ENCODE measurements at regions of chr9 and their contacts with region 1.

Region 1: DNA sequence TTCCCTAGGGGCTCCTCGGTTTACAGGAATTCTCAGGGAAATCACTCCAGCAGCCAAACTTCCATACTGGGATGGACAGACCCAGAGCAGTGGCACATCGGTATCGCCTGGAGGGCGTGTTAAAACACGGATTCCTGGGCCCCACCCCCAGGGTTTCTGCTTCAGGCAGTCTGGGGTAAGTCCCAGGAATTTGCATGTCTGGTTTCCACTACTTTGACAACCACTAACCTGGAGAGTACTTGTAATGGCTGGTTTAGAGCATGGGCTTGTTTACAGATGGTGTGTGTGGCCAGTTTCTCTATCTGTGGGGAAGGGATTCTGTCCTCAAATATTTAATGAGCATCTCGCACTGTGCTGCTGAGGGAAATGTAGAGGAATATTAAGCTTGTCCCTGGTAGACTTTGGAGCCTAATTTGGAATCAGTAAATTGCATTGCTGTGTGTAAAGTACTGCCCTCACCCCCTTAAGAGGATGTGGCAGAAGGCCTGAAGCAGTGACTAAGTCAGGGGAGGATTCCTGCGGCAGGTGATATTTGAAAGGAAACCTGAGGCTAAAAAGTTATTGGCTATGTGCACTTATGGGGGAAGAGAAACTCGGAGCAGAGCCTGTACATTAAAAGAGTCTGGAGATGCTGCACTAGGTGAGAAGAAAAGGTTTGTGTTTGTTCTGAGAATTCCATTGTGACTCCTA is 18.6 kb upstream of the TJP2 start:
- DNase-seq: no peak
- ATAC-seq: no peak
- H3K4me3 ChIP-seq: no peak overlapping the region
- H3K27ac ChIP-seq: no peak overlapping the region
- H3K4me1 ChIP-seq: 0 out of 4 replicates have a peak, but pooled peaks cover 0 to 2% of the 10 kb centered on the region in 2 experiments
- H3K27me3 ChIP-seq: no peaks in the 10 kb centered on the region
- CTCF ChIP-seq: no peak
- POLR2A ChIP-seq: no peak
- RAD21 ChIP-seq: no peak

Region 2: DNA sequence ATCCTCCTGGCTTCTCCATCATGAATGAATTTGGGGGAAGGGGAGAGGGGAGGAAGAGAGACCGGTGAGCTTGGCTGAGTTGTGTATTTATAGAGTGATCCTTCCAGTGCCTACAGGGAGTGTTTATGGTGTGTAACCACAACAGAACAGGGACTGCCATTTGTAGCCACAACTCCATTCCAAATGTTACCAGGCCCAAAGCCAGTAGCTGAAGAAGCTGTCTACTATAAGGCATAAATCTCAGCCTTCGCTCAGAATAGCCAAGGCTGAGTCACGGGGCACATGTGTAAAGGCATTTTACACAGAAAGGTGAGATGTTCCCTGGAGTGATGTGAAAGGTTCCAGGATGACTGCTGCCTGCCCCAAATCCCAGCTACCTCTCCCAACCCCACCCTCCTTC is 617.3 kb before region 1 on chr9:
- CTCF ChIA-PET with region 1: no interaction called
- POLR2A ChIA-PET with region 1: no interaction called
- RAD21 ChIA-PET with region 1: no interaction called
- intact Hi-C with region 1: loop called (anchors 5 kb)
- DNase-seq: no peak
- ATAC-seq: no peak
- H3K4me3 ChIP-seq: no peak overlapping the region
- H3K27ac ChIP-seq: no peak overlapping the region
- H3K4me1 ChIP-seq: no peaks in the 10 kb centered on the region
- H3K27me3 ChIP-seq: peaks cover 4% of the 10 kb centered on the region; the same call in 1 of the 2 replicates
- CTCF ChIP-seq: no peak
- POLR2A ChIP-seq: no peak
- RAD21 ChIP-seq: no peak

Region 3: DNA sequence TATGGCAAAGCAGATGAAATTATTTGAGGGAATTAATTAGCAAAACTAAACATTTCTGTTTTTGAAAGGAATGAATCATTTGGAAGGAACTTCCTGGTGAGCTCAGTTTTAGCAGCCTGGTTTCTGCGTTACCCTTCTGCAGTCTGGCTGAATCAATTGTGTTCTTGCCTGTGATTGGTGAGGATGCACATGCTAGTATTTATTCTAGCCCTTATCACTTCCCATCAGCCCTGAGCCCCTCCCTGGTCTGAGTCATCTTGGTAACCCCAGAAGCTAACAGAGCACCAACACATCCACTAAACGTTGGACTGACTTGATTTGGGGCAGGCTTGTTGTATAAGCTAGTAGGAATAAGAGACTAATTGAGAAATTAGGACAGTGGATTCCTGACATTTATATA is 25.2 kb after region 1 on chr9:
- CTCF ChIA-PET with region 1: interaction called, 14 read pairs
- POLR2A ChIA-PET with region 1: no interaction called
- RAD21 ChIA-PET with region 1: interaction called, 4 to 9 read pairs
- intact Hi-C with region 1: no loop called
- DNase-seq: peak; percentile 83
- ATAC-seq: peak; percentile 90
- H3K4me3 ChIP-seq: peak overlapping the region in 1 of 2 experiments; percentile 22; a peak in 2 of 4 replicates
- H3K27ac ChIP-seq: peak overlapping the region; percentile 57
- H3K4me1 ChIP-seq: peaks cover 45 to 53% of the 10 kb centered on the region in 2 experiments
- H3K27me3 ChIP-seq: no peaks in the 10 kb centered on the region
- CTCF ChIP-seq: no peak
- POLR2A ChIP-seq: no peak
- RAD21 ChIP-seq: no peak

Measured in HCT116 (cell line).